Thyroid gland (tissue), 4 donors: ENCODE measurements at regions of chr11 and their contacts with region 1.

Region 1: GRCh38 chr11:60825571-60826189 is 16.2 kb upstream of the CCDC86 start:
- DNase-seq: no peak
- H3K4me3 ChIP-seq: no peak overlapping the region
- H3K27ac ChIP-seq: no peak overlapping the region
- H3K4me1 ChIP-seq: no peaks in the 10 kb centered on the region
- H3K27me3 ChIP-seq: no peaks in the 10 kb centered on the region
- CTCF ChIP-seq: no peak
- POLR2A ChIP-seq: no peak

Region 2: DNA sequence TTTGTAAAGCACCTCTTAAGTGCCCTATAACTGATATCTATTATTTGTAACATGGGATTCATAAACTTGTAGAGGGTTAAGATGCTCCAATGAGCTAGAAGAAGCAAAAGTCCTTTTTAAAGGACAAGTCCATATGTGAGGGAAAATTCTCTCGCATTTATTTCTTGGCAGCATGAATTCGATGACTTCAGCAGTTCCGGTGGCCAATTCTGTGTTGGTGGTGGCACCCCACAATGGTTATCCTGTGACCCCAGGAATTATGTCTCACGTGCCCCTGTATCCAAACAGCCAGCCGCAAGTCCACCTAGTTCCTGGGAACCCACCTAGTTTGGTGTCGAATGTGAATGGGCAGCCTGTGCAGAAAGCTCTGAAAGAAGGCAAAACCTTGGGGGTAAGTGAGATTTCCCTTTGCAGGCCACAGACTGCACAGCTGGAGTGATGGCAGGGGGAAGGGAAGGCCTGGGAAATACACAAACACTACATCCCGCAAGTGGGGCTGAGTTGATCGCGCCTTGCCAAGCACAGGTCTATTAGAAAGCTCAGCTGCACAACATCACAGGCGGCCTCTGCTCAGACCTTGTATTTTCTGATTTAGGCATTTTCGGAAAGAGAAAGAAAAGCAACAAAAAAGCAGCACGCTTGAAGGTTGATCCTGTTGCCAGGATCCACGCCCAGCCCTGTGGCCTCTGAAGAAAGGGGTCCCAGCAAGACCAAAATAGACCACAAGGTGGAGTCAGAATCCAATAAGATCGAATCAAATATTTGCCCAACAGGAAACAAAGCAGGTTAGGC is 124.8 kb before region 1 on chr11:
- intact Hi-C with region 1: no loop called
- DNase-seq: no peak
- H3K4me3 ChIP-seq: no peak overlapping the region
- H3K27ac ChIP-seq: no peak overlapping the region
- H3K4me1 ChIP-seq: no peaks in the 10 kb centered on the region
- H3K27me3 ChIP-seq: no peaks in the 10 kb centered on the region
- CTCF ChIP-seq: peak in 1 of 6 experiments; percentile 20
- POLR2A ChIP-seq: no peak

Region 3: DNA sequence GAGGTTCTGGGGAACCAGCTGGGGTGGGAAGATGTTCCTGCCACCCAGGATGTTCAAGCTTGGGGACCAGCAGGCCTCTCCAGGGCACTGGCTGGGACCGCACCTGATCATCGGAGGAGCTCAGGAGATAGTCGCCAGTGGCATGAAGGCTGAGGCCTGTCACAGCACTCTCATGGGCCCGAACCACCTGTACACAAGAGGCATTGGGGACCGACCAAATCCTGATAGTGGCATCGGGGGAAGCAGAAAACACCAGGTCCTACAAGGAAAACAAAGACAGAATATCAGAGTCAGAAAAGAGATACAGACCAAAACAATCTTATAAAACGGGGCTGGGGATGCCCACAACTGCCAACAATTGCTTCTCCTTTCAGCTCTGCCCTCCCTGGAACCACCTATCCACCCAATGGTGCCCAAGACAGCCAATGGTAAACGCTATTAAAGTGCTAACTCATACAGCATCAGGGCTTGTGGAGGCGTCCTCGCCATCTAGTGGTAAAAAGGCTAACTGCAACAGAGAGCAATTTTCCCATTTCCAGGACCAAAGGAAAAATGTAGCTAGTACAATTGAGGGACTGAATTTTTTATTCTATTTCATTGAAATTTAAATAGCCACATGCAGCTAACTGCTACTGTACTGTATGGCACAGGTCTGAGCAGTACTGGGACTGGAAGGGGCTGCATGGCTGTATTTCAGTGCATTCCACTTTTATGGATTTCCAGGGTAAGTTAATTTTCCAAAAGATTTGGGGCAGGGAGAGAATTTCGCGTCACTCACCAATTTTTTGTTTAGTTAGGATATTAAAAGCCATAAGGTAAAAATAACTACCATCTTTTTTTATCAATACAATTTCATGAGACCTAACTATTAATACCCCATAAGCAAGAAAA is 73.6 kb after region 1 on chr11:
- intact Hi-C with region 1: loop called (anchors 5 kb)
- DNase-seq: peak; percentile 24
- H3K4me3 ChIP-seq: no peak overlapping the region
- H3K27ac ChIP-seq: no peak overlapping the region
- H3K4me1 ChIP-seq: peaks cover 0 to 6% of the 10 kb centered on the region in 2 donors
- H3K27me3 ChIP-seq: no peaks in the 10 kb centered on the region
- CTCF ChIP-seq: peak; percentile 79 to 94 (median 87)
- POLR2A ChIP-seq: no peak